ENCODE measurements at regions of chr6 and their contacts with region 1.

Region 1: GRCh38 chr6:152948150-152948768 is 34.6 kb downstream of the FBXO5 start:
- DNase-seq: peak; percentile 26
- H3K4me3 ChIP-seq: peak overlapping the region in 1 of 3 experiments; percentile 32
- H3K27ac ChIP-seq: no peak overlapping the region
- H3K4me1 ChIP-seq: peaks cover 13% of the 10 kb centered on the region
- H3K27me3 ChIP-seq: no peaks in the 10 kb centered on the region
- CTCF ChIP-seq: peak; percentile 63 to 65

Region 2: GRCh38 chr6:152552616-152553209 is 395.5 kb before region 1 on chr6:
- CTCF ChIA-PET with region 1: no interaction called
- dilution Hi-C with region 1: no loop called
- in situ Hi-C with region 1: no loop called
- intact Hi-C with region 1: loop called (anchors 2 kb)
- DNase-seq: peak; percentile 43
- H3K4me3 ChIP-seq: no peak overlapping the region
- H3K27ac ChIP-seq: no peak overlapping the region
- H3K4me1 ChIP-seq: no peaks in the 10 kb centered on the region
- H3K27me3 ChIP-seq: no peaks in the 10 kb centered on the region
- CTCF ChIP-seq: peak; percentile 82 to 97

Region 3: DNA sequence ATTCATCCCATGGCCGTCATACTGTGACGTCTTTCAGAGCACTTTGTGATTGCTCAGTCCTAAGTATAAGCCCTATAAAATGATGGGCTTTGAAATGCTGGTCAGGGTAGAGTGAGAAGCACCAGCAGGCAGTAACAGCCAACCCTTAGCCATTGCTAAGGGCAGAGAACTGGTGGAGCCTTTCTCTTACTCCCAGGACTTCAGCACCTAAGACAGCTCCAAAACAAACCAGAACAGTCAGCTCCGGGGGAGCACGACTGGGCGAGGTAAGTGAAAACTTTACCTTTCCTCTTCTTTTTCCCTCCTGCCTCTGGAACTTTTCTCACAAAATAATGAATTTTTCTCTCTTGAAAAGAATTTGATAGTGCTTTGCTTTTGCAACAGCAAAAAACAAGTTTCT is 197.6 kb before region 1 on chr6 and contains the start of gene VIP:
- CTCF ChIA-PET with region 1: interaction called, 5 read pairs
- dilution Hi-C with region 1: no loop called
- in situ Hi-C with region 1: loop called (anchors 10 to 25 kb)
- intact Hi-C with region 1: loop called (anchors 1 kb)
- DNase-seq: peak; percentile 45
- H3K4me3 ChIP-seq: no peak within 1 kb of the TSS
- H3K27ac ChIP-seq: no peak within 1 kb of the TSS
- H3K4me1 ChIP-seq: peaks cover 4% of the 10 kb centered on the region
- H3K27me3 ChIP-seq: no peaks in the 10 kb centered on the region
- CTCF ChIP-seq: no peak
- total RNA-seq, gene VIP: not detected

Region 4: DNA sequence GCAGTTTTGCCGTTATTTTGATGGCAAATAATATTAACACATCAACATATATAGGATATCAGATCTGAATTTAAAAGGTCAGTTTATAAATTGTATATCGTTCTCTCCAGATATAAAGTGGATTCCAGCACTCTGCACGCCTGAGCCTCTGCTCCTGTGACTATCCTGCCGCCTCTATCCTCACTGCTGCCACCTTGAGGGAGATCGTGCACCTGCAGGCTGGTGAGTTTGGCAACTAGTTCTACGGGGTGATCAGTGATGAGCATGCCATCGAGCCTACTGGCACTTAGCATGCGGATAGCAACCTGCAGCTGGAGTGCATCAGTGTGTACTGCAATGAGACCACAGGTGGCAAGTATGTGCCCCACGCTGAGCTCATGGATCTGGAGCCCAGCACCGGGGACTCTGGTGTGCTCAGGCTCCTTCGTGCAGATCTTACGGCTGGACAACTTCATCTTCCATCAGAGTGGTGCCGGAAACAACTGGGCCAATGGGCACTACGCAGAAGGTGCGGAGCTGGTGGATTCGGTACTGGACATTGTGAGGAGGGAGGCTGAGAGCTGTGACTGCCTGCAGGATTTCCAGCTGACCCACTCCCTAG is 50.4 kb before region 1 on chr6:
- CTCF ChIA-PET with region 1: interaction called, 3 read pairs
- dilution Hi-C with region 1: no loop called
- in situ Hi-C with region 1: no loop called
- intact Hi-C with region 1: loop called (anchors 5 kb)
- DNase-seq: peak; percentile 56
- H3K4me3 ChIP-seq: no peak overlapping the region
- H3K27ac ChIP-seq: no peak overlapping the region
- H3K4me1 ChIP-seq: no peaks in the 10 kb centered on the region
- H3K27me3 ChIP-seq: no peaks in the 10 kb centered on the region
- CTCF ChIP-seq: peak; percentile 92 to 96

Measured in mammary epithelial cell (primary cell).